HAP-1 (cell line): ENCODE measurements at regions of chr16 and their contacts with region 1.

Region 1: DNA sequence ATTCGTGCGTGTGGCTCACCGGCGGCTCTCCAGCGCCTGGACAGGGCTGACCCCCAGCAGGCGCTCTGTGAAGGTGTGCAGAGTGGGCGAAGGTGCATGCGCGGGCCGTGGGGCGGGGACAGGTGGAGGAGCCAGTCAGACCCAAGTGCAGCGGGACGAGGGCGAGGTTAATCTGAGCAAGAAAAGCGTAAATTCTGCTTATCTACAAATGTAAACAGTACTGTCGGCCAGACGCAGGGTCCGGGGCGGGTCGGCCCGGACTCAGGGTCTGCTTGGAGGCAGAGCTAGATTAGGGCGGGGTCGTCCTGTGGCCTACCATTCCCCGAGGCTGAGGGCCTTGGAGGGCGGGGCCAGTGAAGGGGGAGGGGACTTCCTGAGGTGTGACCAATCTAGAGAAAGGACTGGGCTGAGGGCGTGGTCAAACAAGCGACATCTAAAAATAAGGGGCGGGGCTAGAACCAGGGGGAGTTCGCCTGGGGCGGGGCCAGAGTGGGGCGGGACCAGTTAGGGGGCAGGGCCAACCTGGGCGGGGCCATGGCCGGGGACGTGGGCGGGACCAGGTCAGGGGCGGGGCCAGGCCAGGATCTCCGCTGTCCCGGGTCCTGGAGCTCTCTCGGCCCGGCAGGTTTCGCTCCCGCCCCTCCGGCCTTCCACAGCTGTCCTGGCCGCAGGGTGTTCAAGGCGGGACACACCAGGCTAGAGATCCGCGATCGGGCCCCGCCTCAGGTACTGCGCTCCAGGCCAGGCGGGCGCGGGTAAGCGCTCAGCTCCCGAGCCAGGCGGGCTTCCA is at the start of gene SEC14L5:
- DNase-seq: peak; percentile 95 to 100
- H3K4me3 ChIP-seq: peak within 1 kb of the TSS; percentile 38
- H3K4me1 ChIP-seq: no peaks in the 10 kb centered on the region
- H3K27me3 ChIP-seq: peaks cover 10% of the 10 kb centered on the region; the same call in 1 of the 2 replicates

Region 2: DNA sequence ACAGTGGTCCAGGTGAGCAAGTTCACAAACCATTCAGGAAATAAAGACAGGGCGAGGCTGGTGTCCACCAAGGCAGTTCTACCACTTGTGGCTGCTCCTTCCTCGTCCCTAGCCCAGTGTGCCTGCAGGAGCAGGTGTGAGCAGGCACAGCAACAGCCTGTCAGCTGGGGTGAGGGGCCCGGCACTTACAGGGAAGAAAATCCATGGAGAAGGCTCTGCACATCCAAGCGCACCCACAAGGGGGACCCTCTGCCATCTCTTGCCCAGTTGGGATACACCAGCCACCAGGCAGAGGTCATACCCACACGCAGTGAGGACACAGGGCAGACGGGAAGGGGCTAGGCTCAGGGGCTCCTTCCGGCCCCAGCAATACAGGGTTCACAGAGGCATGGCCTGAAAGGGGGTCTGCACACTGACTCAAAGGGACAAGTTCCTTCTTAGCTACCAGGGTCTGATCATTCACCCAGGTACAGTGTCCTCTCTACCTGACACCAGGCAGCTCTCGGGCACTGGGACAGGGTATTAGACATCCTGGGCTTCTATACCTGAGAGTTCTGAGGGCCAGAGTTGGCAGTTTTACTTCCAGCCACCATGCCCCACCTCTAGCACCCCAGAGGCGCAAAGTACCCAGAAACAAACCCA is 446.4 kb before region 1 on chr16:
- in situ Hi-C with region 1: loop called (anchors 10 kb)
- DNase-seq: peak; percentile 31 to 73
- H3K4me3 ChIP-seq: no peak overlapping the region
- H3K4me1 ChIP-seq: no peaks in the 10 kb centered on the region; the same call in 1 of the 2 replicates
- H3K27me3 ChIP-seq: no peaks in the 10 kb centered on the region

Region 3: GRCh38 chr16:4749700-4750257 is 208.1 kb before region 1 on chr16:
- in situ Hi-C with region 1: loop called (anchors 10 kb)
- DNase-seq: no peak
- H3K4me3 ChIP-seq: no peak overlapping the region
- H3K4me1 ChIP-seq: no peaks in the 10 kb centered on the region
- H3K27me3 ChIP-seq: no peaks in the 10 kb centered on the region